ENCODE measurements at regions of chr4 and their contacts with region 1.

Region 1: DNA sequence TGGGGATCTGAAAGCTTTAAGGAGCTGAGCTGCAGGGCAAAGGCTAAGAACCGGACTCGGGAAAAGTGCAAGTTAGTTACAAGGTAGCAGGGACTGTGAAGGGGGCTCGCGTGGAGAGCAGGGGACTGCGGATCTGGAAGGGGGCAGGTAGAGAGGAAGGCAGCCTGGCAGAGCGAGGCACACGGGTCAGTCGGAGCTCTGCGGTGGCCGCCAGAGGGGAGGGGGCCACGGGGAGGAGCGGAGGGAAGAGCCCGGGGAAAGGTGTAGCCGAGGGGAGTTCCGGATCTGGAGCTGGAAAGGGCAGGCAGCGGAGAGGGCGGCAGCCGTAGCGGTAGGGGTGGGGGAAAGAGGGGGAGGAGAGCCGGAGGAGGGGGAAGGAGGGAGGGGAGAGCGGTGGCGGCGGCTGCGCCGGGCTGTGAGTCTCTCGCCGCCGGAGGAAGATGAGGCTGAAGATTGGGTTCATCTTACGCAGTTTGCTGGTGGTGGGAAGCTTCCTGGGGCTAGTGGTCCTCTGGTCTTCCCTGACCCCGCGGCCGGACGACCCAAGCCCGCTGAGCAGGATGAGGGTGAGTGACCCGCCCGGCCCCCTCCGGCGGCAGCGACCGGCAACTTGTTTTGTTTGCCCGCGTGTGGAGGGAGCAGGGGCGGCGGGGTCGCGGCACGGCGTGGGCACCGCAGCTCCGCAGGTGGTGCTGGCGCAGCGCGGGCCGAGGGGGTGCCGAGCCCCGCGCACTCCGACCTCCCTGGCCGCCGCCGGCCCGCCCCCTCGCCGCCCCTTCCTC is at the start of gene GALNT7:
- DNase-seq: peak; percentile 73
- H3K4me3 Mint-ChIP-seq: peak within 1 kb of the TSS; percentile 100
- H3K27ac Mint-ChIP-seq: peak within 1 kb of the TSS; percentile 59
- H3K4me1 Mint-ChIP-seq: peaks cover 21% of the 10 kb centered on the region
- H3K27me3 Mint-ChIP-seq: no peaks in the 10 kb centered on the region
- CTCF ChIP-seq: no peak
- total RNA-seq, gene GALNT7: 13.7 and 19.9 TPM in 2 replicates

Region 2: GRCh38 chr4:173074501-173074946 is 94.1 kb before region 1 on chr4:
- CTCF ChIA-PET with region 1: interaction called, 8 read pairs
- POLR2A ChIA-PET with region 1: interaction called, 47 read pairs
- intact Hi-C with region 1: loop called (anchors 2 kb)
- DNase-seq: peak; percentile 96
- H3K4me3 Mint-ChIP-seq: peak overlapping the region; percentile 13
- H3K27ac Mint-ChIP-seq: peak overlapping the region; percentile 59
- H3K4me1 Mint-ChIP-seq: peaks cover 29% of the 10 kb centered on the region
- H3K27me3 Mint-ChIP-seq: no peaks in the 10 kb centered on the region
- CTCF ChIP-seq: no peak

Region 3: DNA sequence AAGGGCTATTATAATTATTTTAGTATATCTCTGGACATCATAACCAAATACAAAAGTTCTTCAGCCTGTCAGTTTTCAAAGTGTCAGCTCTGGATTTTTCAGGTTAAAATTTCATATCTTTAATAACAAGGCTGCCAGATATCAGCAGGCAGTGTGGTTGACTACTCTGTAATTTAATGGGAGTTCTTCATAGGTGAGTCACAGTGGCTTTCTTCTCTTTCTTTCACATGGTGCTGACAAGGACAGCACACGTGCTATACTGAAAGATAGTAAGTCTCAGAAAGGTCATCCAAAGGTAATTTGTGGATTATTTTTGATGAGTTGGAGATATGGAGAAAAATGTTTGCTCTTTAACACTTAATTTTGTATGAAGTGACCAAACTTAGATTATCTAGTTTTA is 43.3 kb after region 1 on chr4:
- CTCF ChIA-PET with region 1: interaction called, 4 read pairs
- POLR2A ChIA-PET with region 1: interaction called, 30 read pairs
- intact Hi-C with region 1: loop called (anchors 5 kb)
- DNase-seq: peak; percentile 77
- H3K4me3 Mint-ChIP-seq: no peak overlapping the region
- H3K27ac Mint-ChIP-seq: no peak overlapping the region
- H3K4me1 Mint-ChIP-seq: peaks cover 31% of the 10 kb centered on the region
- H3K27me3 Mint-ChIP-seq: no peaks in the 10 kb centered on the region
- CTCF ChIP-seq: no peak

Region 4: DNA sequence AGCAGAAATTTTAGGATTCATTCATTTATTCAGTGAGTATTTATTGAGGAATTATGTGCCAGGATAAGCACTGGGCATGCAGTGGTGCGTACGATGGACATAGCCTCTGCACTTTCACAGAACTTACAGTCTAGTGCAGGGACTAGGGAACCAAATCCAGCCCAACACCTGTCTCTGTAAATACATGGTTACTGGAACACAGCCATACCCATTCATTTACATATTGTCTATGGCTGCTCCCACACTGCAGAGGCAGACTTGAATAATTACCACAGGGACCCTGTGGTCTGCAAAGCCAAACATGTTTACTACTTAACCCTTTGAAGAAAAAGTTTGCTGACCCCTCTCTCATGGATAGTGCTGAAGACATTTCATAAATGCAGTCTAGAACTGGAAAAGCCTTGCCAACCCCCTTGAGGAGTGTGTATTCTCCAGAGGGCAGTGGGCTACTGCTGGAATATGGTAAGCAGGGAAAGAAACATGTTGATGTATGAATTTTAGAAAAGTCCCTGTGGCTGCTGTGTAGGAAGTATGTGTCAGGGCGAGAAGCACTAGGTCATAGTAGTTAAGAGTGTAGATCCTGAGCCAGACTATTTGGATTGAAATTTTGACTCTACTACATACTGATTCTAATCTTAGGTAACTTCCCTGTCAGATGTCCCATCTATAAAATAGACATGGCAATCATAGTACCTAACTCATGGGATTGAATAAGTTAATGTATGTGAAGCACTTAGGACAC is 75.5 kb after region 1 on chr4:
- CTCF ChIA-PET with region 1: interaction called, 7 read pairs
- POLR2A ChIA-PET with region 1: interaction called, 17 read pairs
- intact Hi-C with region 1: no loop called
- DNase-seq: no peak
- H3K4me3 Mint-ChIP-seq: no peak overlapping the region
- H3K27ac Mint-ChIP-seq: no peak overlapping the region
- H3K4me1 Mint-ChIP-seq: peaks cover 18% of the 10 kb centered on the region
- H3K27me3 Mint-ChIP-seq: no peaks in the 10 kb centered on the region
- CTCF ChIP-seq: no peak

Region 5: GRCh38 chr4:173257732-173258717 is 89.4 kb after region 1 on chr4:
- CTCF ChIA-PET with region 1: interaction called, 27 read pairs
- POLR2A ChIA-PET with region 1: interaction called, 21 read pairs
- intact Hi-C with region 1: loop called (anchors 1 kb)
- DNase-seq: peak; percentile 70
- H3K4me3 Mint-ChIP-seq: no peak overlapping the region
- H3K27ac Mint-ChIP-seq: no peak overlapping the region
- H3K4me1 Mint-ChIP-seq: peaks cover 5% of the 10 kb centered on the region
- H3K27me3 Mint-ChIP-seq: no peaks in the 10 kb centered on the region
- CTCF ChIP-seq: peak; percentile 77

Measured in MCF 10A (cell line).